Caco-2 (cell line): ENCODE measurements at regions of chr7 and their contacts with region 1.

Region 1: DNA sequence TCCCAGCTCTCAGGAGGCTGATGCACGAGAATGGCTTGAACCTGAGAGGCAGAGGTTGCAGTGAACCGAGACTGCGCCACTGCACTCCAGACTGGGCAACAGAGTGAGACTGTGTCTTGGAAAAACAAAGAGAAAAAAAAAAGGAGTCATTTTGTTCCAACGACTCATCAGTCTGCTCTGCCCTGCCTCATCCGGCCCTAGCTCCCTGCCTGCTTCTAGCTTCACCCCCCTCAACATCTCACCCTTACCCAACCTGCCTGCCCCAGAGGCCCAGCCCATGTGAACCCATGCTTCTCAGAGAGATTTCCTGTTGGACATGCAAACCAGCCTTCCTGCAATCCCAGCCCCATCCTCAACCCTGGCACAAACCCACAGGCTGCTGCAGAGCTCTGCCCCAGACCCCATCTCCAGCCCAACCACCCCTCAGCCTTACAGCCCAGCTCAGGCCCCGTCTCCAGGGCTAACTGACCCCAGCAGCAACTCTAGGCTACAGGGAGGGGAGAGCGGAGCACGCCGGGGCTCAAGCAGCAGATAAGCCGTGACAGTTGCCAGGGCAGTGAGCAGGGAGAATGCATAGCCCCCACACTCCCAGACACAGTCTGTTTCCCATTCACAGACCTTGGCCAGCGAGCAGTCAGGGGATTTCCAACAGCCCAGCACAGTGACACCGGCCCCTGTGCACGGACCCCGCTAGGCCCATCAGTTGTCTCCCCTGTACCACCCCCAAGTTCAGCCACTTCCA is 86.0 kb upstream of the KCTD7 start:
- DNase-seq: no peak
- H3K4me3 ChIP-seq: no peak overlapping the region
- H3K4me3 Mint-ChIP-seq: no peak overlapping the region
- H3K27ac Mint-ChIP-seq: peak overlapping the region; percentile 86
- H3K4me1 ChIP-seq: no peaks in the 10 kb centered on the region
- H3K4me1 Mint-ChIP-seq: no peaks in the 10 kb centered on the region
- H3K27me3 ChIP-seq: no peaks in the 10 kb centered on the region
- H3K27me3 Mint-ChIP-seq: no peaks in the 10 kb centered on the region
- CTCF ChIP-seq: no peak

Region 2: DNA sequence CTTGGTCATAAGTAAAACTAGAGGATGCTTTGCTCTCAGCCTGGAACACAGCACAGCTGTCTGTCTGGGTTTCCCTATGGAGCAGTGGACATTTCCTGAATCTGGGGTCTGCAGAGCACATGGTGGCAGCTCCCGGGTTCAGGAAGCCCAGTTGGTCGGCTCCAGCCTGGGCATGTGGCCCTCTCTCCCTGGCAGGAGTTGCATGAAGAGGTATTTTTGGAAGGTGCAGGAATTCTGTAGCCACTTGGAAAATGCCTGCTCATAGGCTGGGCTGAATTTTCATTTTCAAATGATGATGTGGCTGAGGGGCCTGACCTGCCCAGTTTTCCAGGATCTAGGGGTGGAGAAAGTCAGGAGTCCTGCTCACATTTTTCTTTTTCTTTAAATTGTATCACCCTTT is 344.2 kb before region 1 on chr7:
- CTCF ChIA-PET with region 1: interaction called, 13 read pairs
- POLR2A ChIA-PET with region 1: no interaction called
- intact Hi-C with region 1: no loop called
- DNase-seq: no peak
- H3K4me3 ChIP-seq: no peak overlapping the region
- H3K4me3 Mint-ChIP-seq: no peak overlapping the region
- H3K27ac Mint-ChIP-seq: no peak overlapping the region
- H3K4me1 ChIP-seq: no peaks in the 10 kb centered on the region
- H3K4me1 Mint-ChIP-seq: no peaks in the 10 kb centered on the region
- H3K27me3 ChIP-seq: no peaks in the 10 kb centered on the region
- H3K27me3 Mint-ChIP-seq: no peaks in the 10 kb centered on the region
- CTCF ChIP-seq: no peak